BJ (cell line): ENCODE measurements at regions of chr9 and their contacts with region 1.

Region 1: DNA sequence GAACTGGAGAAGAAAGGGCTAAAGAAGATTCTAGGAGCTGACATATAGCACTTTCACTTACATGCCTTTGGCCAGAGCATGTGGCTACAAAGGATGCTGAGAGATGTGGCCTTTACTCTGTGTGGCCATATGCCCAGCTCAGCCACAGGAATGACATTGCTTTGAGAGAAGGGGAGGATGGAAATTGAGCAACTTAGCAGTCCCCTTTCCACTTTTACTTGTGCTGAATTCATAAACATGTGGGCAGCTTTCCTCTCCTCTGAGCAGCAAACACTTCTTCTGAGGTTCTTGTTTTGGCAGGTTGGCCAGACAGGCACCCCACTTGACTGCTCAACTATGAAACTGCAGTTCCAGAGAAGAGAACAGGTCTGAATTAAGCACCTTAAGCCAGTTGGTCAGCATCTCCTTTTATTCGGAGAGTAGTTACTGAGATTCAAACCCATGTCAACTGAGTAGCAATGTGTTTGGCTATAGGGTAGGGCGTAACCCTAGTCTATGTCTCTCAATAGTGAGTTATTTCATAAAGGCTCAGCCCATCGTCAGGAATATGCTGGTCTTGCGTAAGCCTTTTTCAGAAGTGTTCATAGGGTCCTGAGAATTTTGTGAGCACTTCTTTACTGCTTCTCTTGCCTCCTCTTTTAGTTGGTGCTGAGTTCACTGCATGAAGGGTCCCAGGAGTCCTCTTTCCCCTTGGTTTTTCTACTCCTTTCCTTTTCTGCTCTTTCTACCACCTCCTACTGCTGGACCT is 134.5 kb downstream of the PALM2AKAP2 start:
- DNase-seq: peak; percentile 90
- H3K4me3 ChIP-seq: no peak overlapping the region
- H3K27me3 ChIP-seq: no peaks in the 10 kb centered on the region
- CTCF ChIP-seq: no peak

Region 2: DNA sequence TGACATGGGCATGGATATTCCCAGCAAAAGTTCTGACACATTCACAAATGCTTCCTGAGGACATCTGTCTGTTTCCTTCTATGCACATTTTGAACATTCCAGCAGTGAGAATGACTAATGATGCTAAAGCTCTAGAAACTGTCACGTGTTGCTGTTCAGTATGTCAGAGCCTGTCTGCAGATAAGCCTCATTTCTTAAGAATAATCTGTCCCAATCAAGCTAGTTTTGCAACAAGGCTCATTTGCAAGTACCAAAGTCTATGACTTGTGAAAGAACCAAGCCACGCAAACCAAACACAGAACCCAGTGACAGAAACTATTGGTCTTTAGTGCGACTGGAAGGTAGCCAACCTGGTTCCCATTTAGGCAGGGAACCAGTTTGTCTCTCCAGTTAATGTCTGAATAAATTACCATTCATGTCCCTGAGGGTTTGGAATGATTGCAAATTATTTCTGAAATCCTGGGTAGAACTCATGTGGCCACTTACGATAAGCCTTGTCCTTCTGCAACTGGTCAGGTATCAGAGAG is 115.0 kb after region 1 on chr9:
- CTCF ChIA-PET with region 1: no interaction called
- POLR2A ChIA-PET with region 1: interaction called, 26 read pairs
- DNase-seq: peak; percentile 71
- H3K4me3 ChIP-seq: no peak overlapping the region
- H3K27me3 ChIP-seq: no peaks in the 10 kb centered on the region
- CTCF ChIP-seq: no peak

Region 3: DNA sequence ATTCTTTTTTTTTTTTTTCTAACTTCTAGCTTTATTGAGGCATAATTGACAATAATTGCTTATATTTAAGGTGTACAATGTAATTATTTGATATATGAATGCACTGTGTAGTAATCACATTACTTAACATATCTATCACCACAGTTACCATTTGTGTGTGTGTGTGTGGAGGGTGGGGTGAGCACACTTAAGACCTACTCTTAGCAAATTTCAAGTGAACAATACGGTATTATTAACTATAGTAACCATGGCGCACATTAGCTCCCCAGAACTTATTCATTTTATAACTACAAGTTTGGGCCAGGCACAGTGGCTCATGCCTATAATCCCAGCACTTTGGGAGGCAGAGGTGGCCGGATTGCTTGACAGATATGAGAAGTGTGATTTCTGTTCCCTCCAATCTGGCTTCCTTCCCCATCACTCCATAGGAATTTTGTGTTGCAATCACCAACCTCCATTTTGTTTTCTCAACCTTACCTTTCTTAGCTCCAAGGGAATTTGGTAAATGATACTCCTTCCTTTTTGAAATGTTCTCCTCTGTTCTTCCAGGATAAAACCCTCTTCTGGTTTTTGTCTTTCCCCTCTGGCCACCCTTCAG is 326.9 kb after region 1 on chr9:
- CTCF ChIA-PET with region 1: no interaction called
- POLR2A ChIA-PET with region 1: interaction called, 10 read pairs
- DNase-seq: no peak
- H3K4me3 ChIP-seq: no peak overlapping the region
- H3K27me3 ChIP-seq: no peaks in the 10 kb centered on the region
- CTCF ChIP-seq: no peak